Posterior cingulate gyrus (tissue), 11 donors: ENCODE measurements at regions of chr1 and their contacts with region 1.

Region 1: GRCh38 chr1:159009704-159010361 is at the start of gene IFI16:
- DNase-seq: peak in 1 of 10 donors; percentile 26

Region 2: GRCh38 chr1:158793604-158794003 is 216.2 kb before region 1 on chr1:
- intact Hi-C with region 1: no loop called
- DNase-seq: no peak

Region 3: DNA sequence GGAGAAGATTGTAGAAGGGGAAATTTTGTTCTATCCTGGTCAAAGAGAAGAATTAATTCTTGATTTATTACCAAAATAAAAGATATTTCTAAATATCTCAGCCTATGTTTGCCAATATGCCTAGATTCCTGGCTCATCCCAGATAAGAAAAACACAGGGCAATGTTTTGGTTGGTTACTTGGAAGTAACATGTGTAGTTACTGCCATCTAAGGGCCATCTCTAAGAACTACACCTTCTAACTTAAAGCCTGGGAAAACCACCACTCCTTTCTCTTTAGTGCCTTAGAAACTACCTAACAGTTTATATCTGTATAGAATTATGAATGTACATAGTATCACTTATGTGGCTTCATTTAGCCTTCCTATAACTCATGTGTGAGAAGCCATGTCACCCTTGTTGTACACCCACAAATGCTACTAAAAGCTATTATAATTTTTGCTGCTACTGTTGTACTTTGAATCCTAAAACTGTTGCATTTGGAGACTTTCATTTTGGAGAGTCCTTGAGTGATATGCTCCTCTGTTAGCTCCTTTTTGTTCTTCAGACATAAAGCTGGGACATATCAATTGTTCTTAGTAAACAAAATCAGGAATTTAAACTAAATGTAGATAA is 62.2 kb after region 1 on chr1:
- intact Hi-C with region 1: loop called (anchors 5 kb)
- DNase-seq: no peak